ENCODE measurements at regions of chr5 and their contacts with region 1.

Region 1: GRCh38 chr5:111742177-111742994 is 14.6 kb downstream of the NREP start:
- DNase-seq: no peak
- H3K4me3 Mint-ChIP-seq: peak overlapping the region; percentile 63
- H3K27ac Mint-ChIP-seq: peak overlapping the region; percentile 53
- H3K4me1 Mint-ChIP-seq: peaks cover 46% of the 10 kb centered on the region
- H3K27me3 Mint-ChIP-seq: no peaks in the 10 kb centered on the region

Region 2: DNA sequence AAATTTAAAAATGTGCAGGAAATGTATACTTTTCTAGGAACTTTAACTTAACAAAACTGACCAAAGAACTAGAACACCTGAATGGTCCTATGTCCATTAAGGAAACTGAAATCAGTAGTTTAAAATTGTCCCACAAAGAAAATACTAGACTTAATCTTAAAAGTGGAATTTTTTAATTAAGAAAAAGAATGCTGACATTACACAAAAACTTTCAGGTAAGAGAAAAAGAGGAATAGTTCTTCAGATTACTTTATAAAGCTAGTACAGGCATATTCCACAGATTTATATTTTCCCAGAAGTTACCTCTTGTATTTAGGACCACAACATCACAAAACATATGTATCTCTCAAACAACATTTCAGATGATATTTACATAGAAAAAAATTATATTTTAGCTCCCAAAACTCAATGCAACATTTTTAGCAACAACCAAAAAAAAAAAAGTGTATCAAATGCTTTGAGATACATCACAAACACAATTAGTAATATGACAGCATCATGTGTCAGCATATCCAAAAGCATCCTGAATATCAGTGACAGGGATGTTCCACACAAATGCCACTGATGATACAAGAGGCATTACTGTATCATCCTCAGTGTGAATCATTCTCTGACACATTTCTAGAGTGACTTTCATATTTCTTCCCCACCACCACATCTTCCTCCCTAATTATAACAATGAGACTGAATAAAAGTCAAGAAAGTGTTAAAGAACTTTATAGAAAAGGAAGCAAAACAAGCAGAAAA is 412.7 kb after region 1 on chr5:
- intact Hi-C with region 1: loop called (anchors 5 kb)
- DNase-seq: no peak
- H3K4me3 Mint-ChIP-seq: no peak overlapping the region
- H3K27ac Mint-ChIP-seq: peak overlapping the region; percentile 68
- H3K4me1 Mint-ChIP-seq: peaks cover 12% of the 10 kb centered on the region
- H3K27me3 Mint-ChIP-seq: peaks cover 7% of the 10 kb centered on the region